Activated T-helper 1 cell treated with anti-CD3 and anti-CD28 coated beads, Interleukin-12 subunit alpha, Interleukin-12 subunit beta, Interleukin-2, Interleukin-4 antibody, amounts not matched to agents 30 ng/mL and 10 ng/mL and 1 ng/mL, durations not matched to agents 14 hours and 24 hours and 36 hours (primary cell): ENCODE measurements at regions of chr10 and their contacts with region 1.

Region 1: DNA sequence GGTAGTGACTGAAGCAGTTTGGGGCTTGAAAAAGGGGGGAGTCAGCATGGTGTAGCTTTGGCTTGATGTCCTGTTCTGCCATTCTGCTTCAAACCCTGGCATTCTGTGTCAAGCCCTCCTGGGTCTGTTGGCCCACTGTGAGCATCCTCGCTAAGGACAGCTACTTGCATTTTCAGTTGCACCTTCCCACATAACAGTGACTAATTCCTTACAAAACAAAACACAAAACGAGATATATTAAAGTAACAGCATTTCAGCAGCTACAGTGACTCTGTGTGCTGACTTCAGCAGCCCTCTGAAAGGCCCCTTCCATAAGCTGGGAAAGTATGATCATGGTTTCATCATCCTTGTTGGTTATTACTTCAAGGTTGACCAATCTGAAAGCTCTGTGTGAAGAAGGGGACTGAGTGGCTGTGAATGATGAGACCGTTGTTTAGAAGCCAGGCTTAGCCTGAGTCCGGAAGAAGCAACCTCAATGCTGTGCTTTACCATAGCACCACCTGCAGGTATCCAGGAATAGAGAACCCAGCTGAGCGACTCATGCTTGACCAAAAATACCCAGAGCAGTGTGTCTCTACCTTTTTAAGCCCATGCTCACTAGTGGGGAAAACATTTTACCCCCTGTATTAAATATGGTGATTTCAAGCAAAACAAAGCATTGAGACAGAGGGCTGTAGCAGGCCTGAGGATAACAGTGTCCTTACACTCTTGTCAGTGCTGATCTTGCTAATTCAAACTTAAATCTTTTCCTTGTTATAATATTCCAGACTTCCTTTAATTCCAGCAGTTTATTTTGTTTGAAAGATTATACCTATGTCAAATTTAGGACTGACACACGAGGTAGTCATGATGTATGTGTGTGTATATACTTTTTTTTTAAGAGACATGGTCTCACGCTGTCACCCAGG is 42.6 kb upstream of the CC2D2B start:
- DNase-seq: peak; percentile 57
- H3K4me3 Mint-ChIP-seq: peak overlapping the region; percentile 10
- H3K27ac Mint-ChIP-seq: peak overlapping the region; percentile 62
- H3K4me1 Mint-ChIP-seq: peaks cover 44% of the 10 kb centered on the region
- H3K27me3 Mint-ChIP-seq: no peaks in the 10 kb centered on the region

Region 2: GRCh38 chr10:95374597-95375209 is 490.5 kb before region 1 on chr10:
- intact Hi-C with region 1: loop called (anchors 1 kb)
- DNase-seq: peak; percentile 59
- H3K4me3 Mint-ChIP-seq: no peak overlapping the region
- H3K27ac Mint-ChIP-seq: no peak overlapping the region
- H3K4me1 Mint-ChIP-seq: peaks cover 14% of the 10 kb centered on the region
- H3K27me3 Mint-ChIP-seq: peaks cover 9% of the 10 kb centered on the region

Region 3: GRCh38 chr10:95755511-95756004 is 109.6 kb before region 1 on chr10:
- intact Hi-C with region 1: loop called (anchors 1 kb)
- DNase-seq: no peak
- H3K4me3 Mint-ChIP-seq: peak overlapping the region; percentile 85
- H3K27ac Mint-ChIP-seq: peak overlapping the region; percentile 84
- H3K4me1 Mint-ChIP-seq: peaks cover 48% of the 10 kb centered on the region
- H3K27me3 Mint-ChIP-seq: peaks cover 2% of the 10 kb centered on the region

Region 4: GRCh38 chr10:95818668-95819067 is 46.5 kb before region 1 on chr10:
- intact Hi-C with region 1: loop called (anchors 2 kb)
- DNase-seq: no peak
- H3K4me3 Mint-ChIP-seq: no peak overlapping the region
- H3K27ac Mint-ChIP-seq: peak overlapping the region; percentile 76
- H3K4me1 Mint-ChIP-seq: peaks cover 73% of the 10 kb centered on the region
- H3K27me3 Mint-ChIP-seq: no peaks in the 10 kb centered on the region

Region 5: GRCh38 chr10:95841661-95842498 is 23.3 kb before region 1 on chr10:
- intact Hi-C with region 1: loop called (anchors 1 kb)
- DNase-seq: no peak
- H3K4me3 Mint-ChIP-seq: peak overlapping the region; percentile 45
- H3K27ac Mint-ChIP-seq: peak overlapping the region; percentile 81
- H3K4me1 Mint-ChIP-seq: peaks cover 75% of the 10 kb centered on the region
- H3K27me3 Mint-ChIP-seq: no peaks in the 10 kb centered on the region

Region 6: DNA sequence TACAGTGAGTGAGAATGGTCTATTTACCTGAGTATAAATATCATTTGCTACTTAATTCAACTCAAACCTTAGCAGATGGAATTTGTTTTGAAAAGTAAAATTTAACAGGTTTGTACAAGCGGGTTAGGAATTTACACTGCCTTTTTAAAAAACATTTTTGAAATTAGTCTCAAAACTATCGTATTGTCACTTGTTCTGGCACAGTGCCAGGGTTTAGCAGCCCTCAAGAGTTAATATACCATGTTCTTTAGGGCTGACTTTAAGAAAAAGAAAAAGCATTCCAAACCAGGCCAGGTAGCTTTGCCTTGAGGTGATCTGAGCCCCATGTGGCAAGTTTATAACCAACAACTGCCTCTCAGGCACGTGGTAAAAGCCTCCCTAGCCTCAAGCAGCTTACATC is 196.1 kb after region 1 on chr10:
- intact Hi-C with region 1: loop called (anchors 5 kb)
- DNase-seq: no peak
- H3K4me3 Mint-ChIP-seq: no peak overlapping the region
- H3K27ac Mint-ChIP-seq: no peak overlapping the region
- H3K4me1 Mint-ChIP-seq: peaks cover 37% of the 10 kb centered on the region
- H3K27me3 Mint-ChIP-seq: no peaks in the 10 kb centered on the region